Posterior vena cava (tissue), 2 donors: ENCODE measurements at regions of chr6 and their contacts with region 1.

Region 1: GRCh38 chr6:108739453-108740330 is 108.5 kb upstream of the ARMC2 start:
- DNase-seq: no peak

Region 2: GRCh38 chr6:108673602-108674001 is 66.1 kb before region 1 on chr6:
- intact Hi-C with region 1: loop called in 1 of 2 experiments (anchors 10 kb)
- DNase-seq: no peak

Region 3: DNA sequence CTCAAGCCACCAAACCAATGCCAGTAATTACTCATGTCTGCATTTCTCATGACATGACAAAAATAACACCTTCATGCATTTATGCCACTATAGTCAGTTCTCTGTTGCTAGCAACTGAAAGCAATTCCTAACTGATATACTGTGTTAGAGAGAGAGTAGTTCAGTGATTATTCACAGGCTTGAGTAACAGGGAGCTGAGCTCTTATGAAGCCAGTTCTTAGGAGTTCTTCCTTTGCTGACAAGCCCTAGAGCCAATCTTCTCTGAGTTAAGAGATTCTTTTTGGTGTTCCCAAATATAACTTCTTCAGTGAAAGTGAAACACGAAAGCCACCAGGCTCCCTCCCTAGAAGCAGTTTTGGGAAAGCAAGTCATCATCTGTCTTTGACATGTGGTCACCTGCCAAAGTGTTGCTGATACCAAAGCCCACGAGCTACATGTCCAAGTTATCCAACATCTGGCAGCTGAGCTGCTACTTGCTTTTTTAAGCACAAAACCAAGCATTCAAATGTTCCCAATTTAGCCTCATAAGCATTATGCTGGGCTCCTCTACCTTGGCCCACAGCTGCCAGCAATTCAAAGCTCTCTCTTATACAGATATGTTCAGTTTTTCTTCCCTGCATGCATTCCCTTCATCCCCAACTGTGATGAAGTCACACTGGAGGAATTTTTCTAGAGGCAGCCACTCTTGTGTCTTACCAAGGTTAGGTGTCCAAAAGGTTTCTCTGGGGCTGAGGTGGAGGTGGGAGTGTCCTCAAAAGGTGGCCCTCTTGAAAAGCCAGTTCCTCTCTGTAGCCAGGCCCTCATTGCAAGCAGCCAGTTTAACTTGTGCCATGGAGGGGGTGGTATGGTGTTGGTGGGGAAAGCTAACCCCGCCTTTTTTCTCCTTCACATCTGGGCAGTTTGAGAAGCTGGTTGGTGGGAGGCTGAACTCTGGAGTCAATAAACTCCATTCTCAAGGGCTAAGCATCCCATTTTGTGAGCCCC is 15.9 kb after region 1 on chr6:
- intact Hi-C with region 1: no loop called
- DNase-seq: no peak

Region 4: GRCh38 chr6:109718991-109719390 is 979.3 kb after region 1 on chr6:
- intact Hi-C with region 1: no loop called
- DNase-seq: no peak